Right cardiac atrium (tissue), 5 donors: ENCODE measurements at regions of chr19 and their contacts with region 1.

Region 1: GRCh38 chr19:6048808-6049405 is 61.4 kb downstream of the RFX2 start:
- DNase-seq: peak; percentile 74 to 90 (median 84)
- ATAC-seq: peak; percentile 96 to 97
- H3K4me3 ChIP-seq: no peak overlapping the region
- H3K27ac ChIP-seq: no peak overlapping the region
- H3K4me1 ChIP-seq: no peaks in the 10 kb centered on the region
- H3K27me3 ChIP-seq: no peaks in the 10 kb centered on the region

Region 2: GRCh38 chr19:6125571-6125989 is 76.7 kb after region 1 on chr19:
- intact Hi-C with region 1: loop called (anchors 1 to 5 kb)
- DNase-seq: peak in 2 of 3 donors; percentile 41 to 74
- ATAC-seq: peak; percentile 79 to 84
- H3K4me3 ChIP-seq: no peak overlapping the region
- H3K27ac ChIP-seq: no peak overlapping the region
- H3K4me1 ChIP-seq: no peaks in the 10 kb centered on the region
- H3K27me3 ChIP-seq: no peaks in the 10 kb centered on the region

Region 3: GRCh38 chr19:6292006-6292405 is 243.1 kb after region 1 on chr19:
- intact Hi-C with region 1: loop called in 1 of 4 experiments (anchors 10 kb)
- DNase-seq: no peak
- ATAC-seq: no peak
- H3K4me3 ChIP-seq: no peak overlapping the region
- H3K27ac ChIP-seq: no peak overlapping the region
- H3K4me1 ChIP-seq: no peaks in the 10 kb centered on the region
- H3K27me3 ChIP-seq: no peaks in the 10 kb centered on the region